PC-3 (cell line): ENCODE measurements at regions of chr5 and their contacts with region 1.

Region 1: DNA sequence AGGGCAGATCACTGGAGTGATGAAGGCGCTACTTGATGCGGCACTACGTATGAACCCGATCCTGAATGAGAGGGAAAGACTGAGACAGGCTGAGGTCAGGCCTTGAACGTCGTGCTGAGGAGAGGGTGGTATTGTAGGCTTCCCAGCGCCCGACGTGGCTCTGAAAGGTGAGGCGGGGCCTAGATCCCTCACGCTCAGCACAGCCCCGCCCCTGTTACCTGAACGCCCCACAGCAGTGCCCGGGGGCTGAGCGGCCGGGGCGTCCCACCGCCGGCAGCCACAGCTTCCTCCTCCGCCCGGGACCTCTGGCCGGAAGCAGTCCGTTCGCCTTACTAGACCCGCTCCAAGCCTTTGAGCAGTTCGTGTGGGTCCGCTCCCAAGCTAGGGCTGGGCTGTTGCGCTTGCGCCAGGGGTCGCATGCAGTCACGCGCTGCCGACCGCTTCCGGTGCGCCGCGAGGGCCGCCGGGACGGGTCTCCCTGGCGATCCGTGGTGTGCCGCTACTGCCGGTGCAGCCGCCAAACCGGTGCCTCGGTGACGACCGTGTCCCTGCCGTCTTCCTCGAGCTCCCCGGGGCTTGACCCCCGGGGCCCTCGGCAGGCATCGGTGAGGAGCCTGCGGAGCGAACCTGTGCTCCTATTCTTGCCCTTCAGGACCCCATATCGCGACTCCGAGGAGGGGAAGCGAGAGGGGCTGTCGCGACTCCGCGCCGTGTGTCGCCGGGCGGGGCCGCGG is at the starts of genes HMGXB3 and TIGD6:
- DNase-seq: peak; percentile 99
- ATAC-seq: peak; percentile 89
- H3K4me3 ChIP-seq: peak within 1 kb of the TSS; percentile 89
- H3K27ac ChIP-seq: peak within 1 kb of the TSS; percentile 63
- H3K4me1 ChIP-seq: peaks cover 22% of the 10 kb centered on the region
- H3K27me3 ChIP-seq: no peaks in the 10 kb centered on the region
- CTCF ChIP-seq: no peak
- total RNA-seq, gene HMGXB3: 56.6 and 84.7 TPM in 2 replicates
- total RNA-seq, gene TIGD6: 3.8 and 5.7 TPM in 2 replicates

Region 2: DNA sequence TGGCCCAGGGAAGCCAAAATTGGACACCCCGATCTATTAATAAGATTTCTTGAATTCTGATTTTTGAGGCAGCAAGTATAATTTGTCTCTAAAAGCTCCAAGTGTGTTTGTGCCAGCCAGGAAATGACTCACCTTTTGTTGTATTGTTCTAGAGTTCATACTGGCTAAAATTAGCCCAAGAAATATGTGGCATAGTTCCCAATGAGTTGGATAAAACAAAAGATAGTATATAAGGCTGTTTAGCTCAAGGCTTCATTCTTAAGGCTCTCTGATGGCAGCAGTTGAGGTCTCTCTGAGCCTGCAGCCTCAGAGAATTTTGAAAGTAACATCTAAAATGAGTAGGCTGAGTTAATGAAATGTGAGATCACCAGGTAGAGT is 21.7 kb after region 1 on chr5:
- CTCF ChIA-PET with region 1: interaction called, 5 read pairs
- POLR2A ChIA-PET with region 1: interaction called, 12 read pairs
- intact Hi-C with region 1: loop called (anchors 1 kb)
- DNase-seq: peak; percentile 90
- ATAC-seq: peak; percentile 48
- H3K4me3 ChIP-seq: peak overlapping the region; percentile 27; the same call in 1 of the 2 replicates
- H3K27ac ChIP-seq: peak overlapping the region; percentile 79
- H3K4me1 ChIP-seq: peaks cover 47% of the 10 kb centered on the region
- H3K27me3 ChIP-seq: no peaks in the 10 kb centered on the region
- CTCF ChIP-seq: no peak

Region 3: DNA sequence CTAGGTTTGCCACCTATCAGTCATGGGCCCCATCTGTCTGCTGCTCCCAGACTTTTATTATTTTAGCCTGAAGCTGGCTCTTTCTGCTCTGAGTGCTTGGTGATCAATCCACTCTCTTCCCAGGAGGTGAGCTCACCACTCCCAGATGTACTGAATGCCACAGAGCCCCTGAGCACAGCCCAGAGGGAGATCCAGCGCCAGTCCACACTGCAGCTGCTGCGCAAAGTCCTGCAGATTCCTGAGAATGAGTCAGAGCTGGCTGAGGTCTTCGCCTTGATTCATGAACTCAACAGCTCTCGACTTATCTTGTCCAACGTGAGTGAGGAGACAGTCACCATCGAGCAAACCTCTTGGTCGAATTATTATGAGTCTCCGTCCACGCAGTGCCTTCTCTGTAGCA is 36.1 kb after region 1 on chr5:
- CTCF ChIA-PET with region 1: no interaction called
- POLR2A ChIA-PET with region 1: no interaction called
- intact Hi-C with region 1: loop called (anchors 5 kb)
- DNase-seq: peak; percentile 88
- ATAC-seq: peak; percentile 99
- H3K4me3 ChIP-seq: no peak overlapping the region
- H3K27ac ChIP-seq: peak overlapping the region; percentile 27
- H3K4me1 ChIP-seq: peaks cover 21% of the 10 kb centered on the region
- H3K27me3 ChIP-seq: no peaks in the 10 kb centered on the region
- CTCF ChIP-seq: no peak

Region 4: DNA sequence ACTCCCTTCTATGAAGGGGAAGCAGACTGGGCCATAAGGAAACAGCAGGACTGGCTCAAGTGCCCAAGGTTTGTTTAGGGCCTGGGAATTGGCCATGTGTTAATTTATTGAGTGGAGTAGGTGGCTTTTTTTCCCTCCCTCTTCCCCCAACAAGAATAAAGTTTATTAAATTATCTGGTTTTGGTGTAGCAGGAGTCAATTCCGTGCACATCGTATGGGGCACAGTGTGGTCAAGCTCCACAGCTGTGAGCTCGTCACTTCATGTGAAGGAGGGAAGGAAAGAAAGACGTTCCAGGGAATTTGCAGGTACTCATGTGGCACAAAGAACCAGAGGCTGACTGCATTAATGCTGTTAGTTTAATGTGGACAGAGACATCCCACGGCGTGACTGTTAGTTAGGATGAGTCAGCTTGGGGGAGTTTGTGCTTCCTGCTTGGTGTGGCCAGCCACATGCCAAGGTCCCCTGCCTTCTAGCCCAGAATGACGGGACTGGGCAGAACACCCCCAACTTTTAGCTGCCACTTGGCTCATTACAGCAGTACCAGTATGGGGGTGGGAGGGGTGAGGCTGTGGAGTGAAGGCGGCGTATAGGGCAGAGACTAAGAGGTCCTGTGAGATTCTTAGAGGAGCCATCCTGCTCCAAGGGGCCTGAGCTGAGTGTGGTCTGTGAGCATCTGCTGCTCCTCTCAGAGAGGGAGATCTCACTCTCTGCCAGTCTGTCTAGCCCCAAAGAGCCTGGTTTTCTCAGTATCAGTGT is 52.7 kb after region 1 on chr5:
- CTCF ChIA-PET with region 1: no interaction called
- POLR2A ChIA-PET with region 1: no interaction called
- intact Hi-C with region 1: loop called (anchors 2 kb)
- DNase-seq: peak; percentile 90
- ATAC-seq: peak; percentile 80
- H3K4me3 ChIP-seq: no peak overlapping the region
- H3K27ac ChIP-seq: peak overlapping the region; percentile 68
- H3K4me1 ChIP-seq: peaks cover 37% of the 10 kb centered on the region
- H3K27me3 ChIP-seq: no peaks in the 10 kb centered on the region
- CTCF ChIP-seq: no peak

Region 5: GRCh38 chr5:150217873-150218692 is 217.7 kb after region 1 on chr5:
- CTCF ChIA-PET with region 1: no interaction called
- POLR2A ChIA-PET with region 1: no interaction called
- intact Hi-C with region 1: loop called (anchors 5 kb)
- DNase-seq: peak; percentile 93
- ATAC-seq: peak; percentile 94
- H3K4me3 ChIP-seq: no peak overlapping the region
- H3K27ac ChIP-seq: no peak overlapping the region
- H3K4me1 ChIP-seq: peaks cover 8% of the 10 kb centered on the region; the same call in 1 of the 2 replicates
- H3K27me3 ChIP-seq: no peaks in the 10 kb centered on the region
- CTCF ChIP-seq: peak; percentile 97